MCF 10A (cell line): ENCODE measurements at regions of chr1 and their contacts with region 1.

Region 1: GRCh38 chr1:232667778-232668165 is 37.8 kb upstream of the SIPA1L2 start:
- DNase-seq: no peak
- H3K4me3 Mint-ChIP-seq: no peak overlapping the region
- H3K27ac Mint-ChIP-seq: no peak overlapping the region
- H3K4me1 Mint-ChIP-seq: peaks cover 14% of the 10 kb centered on the region
- H3K27me3 Mint-ChIP-seq: no peaks in the 10 kb centered on the region
- CTCF ChIP-seq: no peak

Region 2: GRCh38 chr1:232643251-232643650 is 24.5 kb before region 1 on chr1:
- CTCF ChIA-PET with region 1: no interaction called
- POLR2A ChIA-PET with region 1: interaction called, 11 read pairs
- intact Hi-C with region 1: no loop called
- DNase-seq: no peak
- H3K4me3 Mint-ChIP-seq: no peak overlapping the region
- H3K27ac Mint-ChIP-seq: no peak overlapping the region
- H3K4me1 Mint-ChIP-seq: no peaks in the 10 kb centered on the region
- H3K27me3 Mint-ChIP-seq: no peaks in the 10 kb centered on the region
- CTCF ChIP-seq: no peak

Region 3: GRCh38 chr1:232655028-232655747 is 12.6 kb before region 1 on chr1:
- CTCF ChIA-PET with region 1: interaction called, 9 read pairs
- POLR2A ChIA-PET with region 1: interaction called, 11 read pairs
- intact Hi-C with region 1: no loop called
- DNase-seq: no peak
- H3K4me3 Mint-ChIP-seq: no peak overlapping the region
- H3K27ac Mint-ChIP-seq: no peak overlapping the region
- H3K4me1 Mint-ChIP-seq: peaks cover 13% of the 10 kb centered on the region
- H3K27me3 Mint-ChIP-seq: no peaks in the 10 kb centered on the region
- CTCF ChIP-seq: no peak

Region 4: DNA sequence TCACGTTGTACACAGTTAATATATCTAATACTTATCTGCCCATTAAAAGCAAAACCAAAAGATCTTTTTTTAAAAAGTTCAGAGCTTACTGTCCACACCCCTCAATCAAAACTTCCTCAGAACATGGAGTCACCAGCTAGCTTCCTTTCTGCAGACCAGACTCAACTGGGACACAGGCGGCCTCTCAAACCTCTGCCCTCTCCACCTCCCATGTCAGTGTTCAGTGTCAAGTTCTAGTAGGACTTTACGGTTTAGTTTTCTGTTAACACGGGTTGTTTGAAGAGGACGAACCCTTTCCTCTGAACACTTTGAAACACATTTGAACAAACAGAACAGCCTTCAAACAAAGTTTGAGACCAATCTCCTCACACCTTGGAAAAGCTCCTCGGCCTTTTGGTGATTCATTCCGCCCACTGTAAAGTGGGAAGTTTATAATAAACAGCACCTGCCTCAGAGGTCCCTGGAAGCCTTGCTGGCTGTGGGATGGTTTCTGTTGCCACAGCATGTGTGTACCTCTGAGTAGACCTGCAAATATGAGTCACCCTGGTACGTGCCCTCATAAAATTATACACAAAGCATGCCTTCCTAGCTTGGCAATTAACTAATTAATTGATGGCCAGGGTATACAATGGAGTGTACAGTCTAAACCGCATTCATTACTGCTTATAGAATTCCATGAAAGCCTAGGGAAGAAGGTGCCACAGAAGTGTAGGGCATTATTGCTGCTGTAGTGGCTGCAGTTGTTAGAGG is 10.6 kb after region 1 on chr1:
- CTCF ChIA-PET with region 1: interaction called, 5 read pairs
- POLR2A ChIA-PET with region 1: interaction called, 19 read pairs
- intact Hi-C with region 1: no loop called
- DNase-seq: peak; percentile 92
- H3K4me3 Mint-ChIP-seq: no peak overlapping the region
- H3K27ac Mint-ChIP-seq: peak overlapping the region; percentile 78
- H3K4me1 Mint-ChIP-seq: peaks cover 12% of the 10 kb centered on the region
- H3K27me3 Mint-ChIP-seq: no peaks in the 10 kb centered on the region
- CTCF ChIP-seq: no peak